ENCODE measurements at regions of chr9 and their contacts with region 1.

Region 1: GRCh38 chr9:85610074-85610860 is 131.5 kb downstream of the AGTPBP1 start:
- DNase-seq: peak; percentile 51
- ATAC-seq: peak; percentile 76
- H3K4me3 ChIP-seq: no peak overlapping the region
- H3K27ac ChIP-seq: no peak overlapping the region
- H3K4me1 ChIP-seq: no peaks in the 10 kb centered on the region
- H3K27me3 ChIP-seq: no peaks in the 10 kb centered on the region
- CTCF ChIP-seq: peak; percentile 67 to 89 (median 71)
- POLR2A ChIP-seq: no peak
- RAD21 ChIP-seq: peak; percentile 82

Region 2: GRCh38 chr9:84953797-84954705 is 656.2 kb before region 1 on chr9:
- CTCF ChIA-PET with region 1: no interaction called
- POLR2A ChIA-PET with region 1: no interaction called
- RAD21 ChIA-PET with region 1: no interaction called
- intact Hi-C with region 1: loop called (anchors 10 kb)
- DNase-seq: peak; percentile 48
- ATAC-seq: peak; percentile 99
- H3K4me3 ChIP-seq: no peak overlapping the region
- H3K27ac ChIP-seq: no peak overlapping the region
- H3K4me1 ChIP-seq: 0 out of 4 replicates have a peak, but pooled peaks cover 0 to 3% of the 10 kb centered on the region in 2 experiments
- H3K27me3 ChIP-seq: no peaks in the 10 kb centered on the region
- CTCF ChIP-seq: peak; percentile 77 to 96 (median 96)
- POLR2A ChIP-seq: no peak
- RAD21 ChIP-seq: peak; percentile 78

Region 3: DNA sequence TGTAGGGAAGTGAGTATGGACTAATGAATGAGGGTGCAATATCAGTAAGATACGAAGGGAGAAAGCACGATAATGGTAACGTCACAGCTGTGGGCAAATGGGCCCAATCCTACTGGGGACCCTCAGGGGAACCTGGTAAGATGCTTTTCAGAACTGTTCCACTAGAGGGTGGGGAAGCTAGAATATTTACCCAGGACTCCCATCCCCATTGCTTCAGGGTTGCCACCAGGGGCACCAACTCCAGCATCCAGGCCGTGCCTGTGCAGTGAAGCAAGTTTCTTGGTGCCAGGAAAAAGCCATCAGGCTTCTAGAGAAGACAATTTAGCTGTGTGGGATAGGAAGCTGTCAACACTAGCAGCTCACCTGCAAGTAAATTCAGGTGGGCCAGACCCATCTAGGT is 277.8 kb before region 1 on chr9:
- CTCF ChIA-PET with region 1: interaction called, 13 read pairs
- POLR2A ChIA-PET with region 1: no interaction called
- RAD21 ChIA-PET with region 1: no interaction called
- intact Hi-C with region 1: loop called (anchors 1 kb)
- DNase-seq: peak; percentile 18
- ATAC-seq: peak; percentile 98
- H3K4me3 ChIP-seq: no peak overlapping the region
- H3K27ac ChIP-seq: no peak overlapping the region
- H3K4me1 ChIP-seq: no peaks in the 10 kb centered on the region
- H3K27me3 ChIP-seq: peaks cover 36% of the 10 kb centered on the region
- CTCF ChIP-seq: peak; percentile 63 to 69 (median 63)
- POLR2A ChIP-seq: no peak
- RAD21 ChIP-seq: peak; percentile 35

Region 4: GRCh38 chr9:85508616-85509015 is 101.7 kb before region 1 on chr9:
- CTCF ChIA-PET with region 1: interaction called, 17 read pairs
- POLR2A ChIA-PET with region 1: no interaction called
- RAD21 ChIA-PET with region 1: no interaction called
- intact Hi-C with region 1: loop called (anchors 2 kb)
- DNase-seq: no peak
- ATAC-seq: peak; percentile 69
- H3K4me3 ChIP-seq: no peak overlapping the region
- H3K27ac ChIP-seq: no peak overlapping the region
- H3K4me1 ChIP-seq: peaks cover 0 to 3% of the 10 kb centered on the region in 2 experiments; a peak in 1 of 4 replicates
- H3K27me3 ChIP-seq: peaks cover 4% of the 10 kb centered on the region; the same call in 1 of the 2 replicates
- CTCF ChIP-seq: peak; percentile 22 to 38 (median 25); a peak in 3 of 6 replicates
- POLR2A ChIP-seq: no peak
- RAD21 ChIP-seq: peak; percentile 47